KBM-7 (cell line): ENCODE measurements at regions of chr5 and their contacts with region 1.

Region 1: GRCh38 chr5:10635257-10635866 is 71.5 kb downstream of the ANKRD33B start:
- DNase-seq: peak; percentile 87

Region 2: GRCh38 chr5:10452768-10453331 is 182.5 kb before region 1 on chr5:
- in situ Hi-C with region 1: loop called (anchors 25 kb)
- DNase-seq: peak; percentile 79